PC-9 (cell line): ENCODE measurements at regions of chr19 and their contacts with region 1.

Region 1: DNA sequence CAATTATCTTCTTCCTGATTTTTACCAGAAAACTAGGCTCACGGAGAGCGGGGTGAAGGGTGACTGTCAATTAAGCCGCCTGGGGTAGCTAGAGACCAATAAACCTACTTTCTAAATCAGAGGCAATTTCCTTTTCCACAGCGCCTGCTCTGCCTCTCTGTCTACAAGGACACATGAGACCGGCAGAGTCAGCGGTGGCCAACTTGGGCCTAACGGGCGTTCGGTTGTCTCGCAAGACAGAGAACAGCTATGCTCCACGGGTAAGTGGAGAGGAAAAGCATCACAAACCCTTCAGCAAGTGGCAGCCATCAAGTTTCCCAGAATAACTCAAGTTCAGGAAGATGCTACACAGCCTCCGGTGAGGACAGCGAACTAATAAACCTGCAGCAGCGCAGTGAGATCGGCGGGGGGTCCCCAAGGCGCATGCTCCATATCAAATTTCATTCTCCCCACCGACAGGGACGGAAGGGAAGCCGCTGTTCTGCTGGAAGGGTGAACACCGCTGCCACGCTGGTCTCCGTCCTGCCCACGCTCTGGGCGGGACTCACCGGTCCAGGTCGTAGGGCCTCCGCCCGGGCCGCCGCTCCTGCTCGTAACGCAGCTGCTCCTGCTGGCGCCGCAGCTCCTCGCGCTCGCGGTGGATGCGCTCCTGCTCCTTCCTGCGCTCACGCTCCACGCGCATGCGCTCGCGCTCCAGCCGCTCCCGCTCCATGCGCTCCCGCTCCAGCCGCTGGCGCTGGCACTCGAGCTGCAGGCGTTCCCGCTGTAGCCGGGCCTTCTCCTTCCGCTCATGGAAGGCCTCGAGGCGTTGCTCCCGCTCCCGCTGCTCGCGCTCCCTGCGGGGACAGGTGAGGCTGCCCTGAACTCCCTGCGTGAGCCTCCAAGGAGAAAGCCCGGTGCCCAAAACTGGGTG is 25.8 kb upstream of the TINCR start:
- DNase-seq: no peak
- H3K4me3 ChIP-seq: no peak overlapping the region
- H3K27ac ChIP-seq: no peak overlapping the region
- H3K4me1 ChIP-seq: no peaks in the 10 kb centered on the region
- H3K27me3 ChIP-seq: no peaks in the 10 kb centered on the region
- CTCF ChIP-seq: no peak

Region 2: GRCh38 chr19:4981681-4981958 is 612.0 kb before region 1 on chr19:
- CTCF ChIA-PET with region 1: no interaction called
- POLR2A ChIA-PET with region 1: interaction called, 19 read pairs
- intact Hi-C with region 1: no loop called
- DNase-seq: no peak
- H3K4me3 ChIP-seq: no peak overlapping the region
- H3K27ac ChIP-seq: no peak overlapping the region
- H3K4me1 ChIP-seq: no peaks in the 10 kb centered on the region
- H3K27me3 ChIP-seq: no peaks in the 10 kb centered on the region
- CTCF ChIP-seq: no peak

Region 3: GRCh38 chr19:5803752-5804515 is 210.3 kb after region 1 on chr19:
- CTCF ChIA-PET with region 1: no interaction called
- POLR2A ChIA-PET with region 1: no interaction called
- intact Hi-C with region 1: no loop called
- DNase-seq: peak; percentile 68 to 92
- H3K4me3 ChIP-seq: peak overlapping the region; percentile 37; the same call in 1 of the 2 replicates
- H3K27ac ChIP-seq: no peak overlapping the region
- H3K4me1 ChIP-seq: no peaks in the 10 kb centered on the region
- H3K27me3 ChIP-seq: 0 out of 2 replicates have a peak, but pooled peaks cover 8% of the 10 kb centered on the region
- CTCF ChIP-seq: peak; percentile 83